CD8-positive, alpha-beta T cell (primary cell): ENCODE measurements at regions of chr12 and their contacts with region 1.

Region 1: DNA sequence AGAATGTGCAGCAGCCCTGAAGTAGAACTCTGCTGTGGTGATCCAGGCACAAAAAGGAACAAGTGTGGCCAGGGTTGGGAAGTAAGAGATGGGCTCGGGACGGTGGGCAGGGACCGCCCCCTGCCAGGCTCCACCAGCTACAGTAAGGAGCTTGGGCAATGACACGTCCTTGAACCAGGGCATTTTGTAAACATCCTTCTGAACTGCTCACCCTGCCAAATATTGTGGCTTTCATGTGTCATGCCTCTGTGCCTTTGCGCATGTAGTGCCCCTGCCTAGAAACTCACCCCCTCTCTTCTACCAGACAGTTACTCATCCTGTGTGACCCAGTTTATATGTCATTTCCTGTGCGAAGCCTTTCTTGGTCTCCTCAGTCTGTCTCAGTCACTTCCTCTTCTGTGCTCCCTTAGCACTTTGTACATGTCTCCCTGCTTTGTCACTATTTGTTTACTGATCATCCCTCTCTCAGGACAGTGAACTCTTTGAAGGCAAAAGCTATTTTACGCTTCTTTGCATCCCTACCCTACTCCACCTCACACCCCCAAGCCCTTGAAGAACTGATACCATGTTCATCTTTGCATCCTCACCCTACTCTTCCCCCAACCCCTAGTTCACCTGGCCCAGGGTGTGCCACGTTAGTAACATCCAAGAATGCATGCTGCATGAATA is 108.9 kb upstream of the PLEKHG7 start:
- DNase-seq: peak; percentile 66 to 98 (median 77)
- ATAC-seq: peak; percentile 85
- H3K4me3 ChIP-seq: no peak overlapping the region
- H3K4me3 Mint-ChIP-seq: peak overlapping the region; percentile 44
- H3K27ac ChIP-seq: peak overlapping the region; percentile 73 to 99
- H3K27ac Mint-ChIP-seq: peak overlapping the region; percentile 98
- H3K4me1 ChIP-seq: peaks cover 26% of the 10 kb centered on the region
- H3K4me1 Mint-ChIP-seq: peaks cover 39% of the 10 kb centered on the region
- H3K27me3 ChIP-seq: no peaks in the 10 kb centered on the region
- H3K27me3 Mint-ChIP-seq: no peaks in the 10 kb centered on the region
- CTCF ChIP-seq: no peak

Region 2: DNA sequence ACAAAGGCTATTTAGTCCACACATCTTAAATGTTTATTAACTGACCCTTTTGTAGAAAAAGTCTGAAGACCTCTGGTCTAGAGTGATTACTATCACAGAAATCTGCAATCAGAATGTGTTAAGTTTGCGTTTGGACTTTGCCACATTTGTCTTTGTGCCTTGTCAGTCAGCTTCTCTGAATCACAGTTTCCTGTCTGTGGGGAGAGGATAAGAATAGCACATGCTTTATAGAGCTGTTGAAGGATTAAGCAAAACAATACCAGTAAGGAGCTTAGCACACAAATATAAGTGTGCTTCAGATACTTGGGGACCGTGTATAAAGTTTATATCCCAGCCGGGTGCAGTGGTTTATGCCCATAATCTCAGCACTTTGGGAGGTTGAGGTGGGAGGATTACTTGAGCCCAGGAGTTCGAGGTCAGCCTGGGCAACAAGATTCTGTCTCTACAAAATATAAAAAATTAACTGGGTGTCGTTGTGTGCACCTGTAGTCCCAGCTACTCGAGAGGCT is 385.2 kb before region 1 on chr12:
- CTCF ChIA-PET with region 1: no interaction called
- POLR2A ChIA-PET with region 1: no interaction called
- intact Hi-C with region 1: loop called in 1 of 2 experiments (anchors 1 kb)
- DNase-seq: peak in 7 of 9 experiments; percentile 25 to 74 (median 32)
- ATAC-seq: peak; percentile 83
- H3K4me3 ChIP-seq: peak overlapping the region; percentile 28 to 32
- H3K4me3 Mint-ChIP-seq: peak overlapping the region; percentile 67
- H3K27ac ChIP-seq: peak overlapping the region; percentile 26 to 34
- H3K27ac Mint-ChIP-seq: peak overlapping the region; percentile 92
- H3K4me1 ChIP-seq: peaks cover 27% of the 10 kb centered on the region
- H3K4me1 Mint-ChIP-seq: peaks cover 40% of the 10 kb centered on the region
- H3K27me3 ChIP-seq: no peaks in the 10 kb centered on the region
- H3K27me3 Mint-ChIP-seq: no peaks in the 10 kb centered on the region
- CTCF ChIP-seq: no peak